ENCODE measurements at regions of chr12 and their contacts with region 1.

Region 1: DNA sequence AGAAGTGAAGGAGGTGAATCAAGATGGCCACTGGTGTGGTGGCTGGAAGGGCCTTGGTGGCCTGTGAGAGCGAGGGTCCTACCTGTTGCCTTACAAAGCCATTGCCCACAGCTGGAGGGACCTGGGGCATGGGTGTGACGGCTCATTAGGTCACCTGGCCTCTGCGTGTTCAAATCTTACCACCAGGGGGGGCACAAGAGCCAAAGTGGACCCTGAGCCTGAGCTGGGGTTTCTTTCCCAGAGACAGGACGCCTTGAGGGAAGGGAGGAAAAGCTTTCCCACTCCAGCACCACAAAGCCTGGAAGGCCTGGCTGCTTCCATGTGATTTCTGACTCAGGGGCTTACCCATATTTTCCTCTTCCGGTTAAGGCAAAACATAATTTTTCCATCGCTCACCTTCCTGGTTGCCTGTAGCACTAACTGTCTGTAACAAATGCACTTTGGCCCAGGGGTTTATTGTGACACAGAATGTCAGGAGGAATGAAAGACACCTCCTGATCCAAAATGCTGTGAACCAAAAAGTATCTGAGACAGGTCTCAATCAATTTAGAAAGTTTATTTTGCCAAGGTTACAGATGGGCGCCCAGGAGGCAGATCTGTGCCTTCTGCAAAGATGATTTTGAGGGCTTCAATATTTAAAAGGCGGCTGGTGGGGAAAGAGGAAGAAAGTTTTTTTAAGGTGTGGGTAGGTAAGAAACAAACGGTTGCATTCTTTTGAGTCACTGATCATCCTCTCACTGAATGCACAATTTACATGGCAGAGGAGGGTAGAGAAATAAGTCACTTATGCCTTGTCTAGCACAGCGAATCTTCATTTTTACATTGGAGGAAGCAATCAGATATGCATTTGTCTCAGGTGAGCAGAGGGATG is 4.3 kb upstream of the CD9 start:
- DNase-seq: peak; percentile 83
- ATAC-seq: peak; percentile 83
- H3K4me3 Mint-ChIP-seq: no peak overlapping the region
- H3K27ac Mint-ChIP-seq: no peak overlapping the region
- H3K4me1 Mint-ChIP-seq: peaks cover 10% of the 10 kb centered on the region
- H3K27me3 Mint-ChIP-seq: peaks cover 37% of the 10 kb centered on the region

Region 2: DNA sequence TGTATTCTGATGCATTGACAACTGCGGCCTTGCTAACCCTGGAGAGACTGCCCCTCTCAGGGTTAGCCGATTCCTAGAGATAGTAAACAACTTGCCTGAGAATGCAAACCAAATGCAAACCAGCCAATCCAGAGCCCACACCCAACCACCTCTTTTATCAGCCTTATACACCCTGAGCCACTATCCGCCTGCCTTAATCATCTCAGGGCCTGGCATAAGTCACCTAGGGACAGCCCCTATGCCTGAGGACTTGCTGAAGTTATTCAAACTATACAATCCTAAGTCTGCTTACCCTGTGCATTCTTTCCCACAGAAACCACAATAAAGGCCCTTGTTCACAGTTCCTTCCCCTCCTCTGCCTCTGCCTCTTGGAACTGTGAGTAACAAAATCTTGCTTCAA is 975.1 kb before region 1 on chr12:
- CTCF ChIA-PET with region 1: no interaction called
- POLR2A ChIA-PET with region 1: no interaction called
- DNase-seq: peak; percentile 26
- ATAC-seq: peak; percentile 68
- H3K4me3 Mint-ChIP-seq: no peak overlapping the region
- H3K27ac Mint-ChIP-seq: no peak overlapping the region
- H3K4me1 Mint-ChIP-seq: peaks cover 9% of the 10 kb centered on the region
- H3K27me3 Mint-ChIP-seq: no peaks in the 10 kb centered on the region

Region 3: DNA sequence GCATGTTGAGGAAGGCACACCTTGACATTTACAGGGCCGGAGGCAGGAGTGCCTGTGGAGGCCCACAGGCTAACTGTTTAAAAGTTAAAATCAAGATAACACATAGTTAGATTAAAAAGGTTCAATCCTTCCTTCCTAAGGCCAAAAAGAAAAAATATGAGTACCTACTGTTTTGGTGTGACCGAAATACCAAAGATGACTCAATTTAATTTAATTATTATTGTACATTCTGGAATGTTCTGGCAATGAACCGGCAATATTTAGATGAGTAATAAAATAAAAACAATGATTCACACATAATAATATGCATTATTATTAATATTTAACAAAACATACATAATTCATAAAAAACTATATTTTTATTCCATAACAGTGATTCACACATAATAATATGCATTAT is 900.7 kb before region 1 on chr12:
- CTCF ChIA-PET with region 1: no interaction called
- POLR2A ChIA-PET with region 1: no interaction called
- DNase-seq: no peak
- ATAC-seq: no peak
- H3K4me3 Mint-ChIP-seq: no peak overlapping the region
- H3K27ac Mint-ChIP-seq: no peak overlapping the region
- H3K4me1 Mint-ChIP-seq: no peaks in the 10 kb centered on the region
- H3K27me3 Mint-ChIP-seq: no peaks in the 10 kb centered on the region

Region 4: GRCh38 chr12:6116175-6117021 is 79.5 kb before region 1 on chr12:
- CTCF ChIA-PET with region 1: no interaction called
- POLR2A ChIA-PET with region 1: no interaction called
- DNase-seq: no peak
- ATAC-seq: no peak
- H3K4me3 Mint-ChIP-seq: no peak overlapping the region
- H3K27ac Mint-ChIP-seq: no peak overlapping the region
- H3K4me1 Mint-ChIP-seq: peaks cover 3% of the 10 kb centered on the region
- H3K27me3 Mint-ChIP-seq: peaks cover 4% of the 10 kb centered on the region

Region 5: GRCh38 chr12:6140651-6141447 is 55.1 kb before region 1 on chr12:
- CTCF ChIA-PET with region 1: interaction called, 10 read pairs
- POLR2A ChIA-PET with region 1: no interaction called
- DNase-seq: peak; percentile 31
- ATAC-seq: peak; percentile 71
- H3K4me3 Mint-ChIP-seq: peak overlapping the region; percentile 42
- H3K27ac Mint-ChIP-seq: peak overlapping the region; percentile 92
- H3K4me1 Mint-ChIP-seq: peaks cover 45% of the 10 kb centered on the region
- H3K27me3 Mint-ChIP-seq: no peaks in the 10 kb centered on the region

Region 6: DNA sequence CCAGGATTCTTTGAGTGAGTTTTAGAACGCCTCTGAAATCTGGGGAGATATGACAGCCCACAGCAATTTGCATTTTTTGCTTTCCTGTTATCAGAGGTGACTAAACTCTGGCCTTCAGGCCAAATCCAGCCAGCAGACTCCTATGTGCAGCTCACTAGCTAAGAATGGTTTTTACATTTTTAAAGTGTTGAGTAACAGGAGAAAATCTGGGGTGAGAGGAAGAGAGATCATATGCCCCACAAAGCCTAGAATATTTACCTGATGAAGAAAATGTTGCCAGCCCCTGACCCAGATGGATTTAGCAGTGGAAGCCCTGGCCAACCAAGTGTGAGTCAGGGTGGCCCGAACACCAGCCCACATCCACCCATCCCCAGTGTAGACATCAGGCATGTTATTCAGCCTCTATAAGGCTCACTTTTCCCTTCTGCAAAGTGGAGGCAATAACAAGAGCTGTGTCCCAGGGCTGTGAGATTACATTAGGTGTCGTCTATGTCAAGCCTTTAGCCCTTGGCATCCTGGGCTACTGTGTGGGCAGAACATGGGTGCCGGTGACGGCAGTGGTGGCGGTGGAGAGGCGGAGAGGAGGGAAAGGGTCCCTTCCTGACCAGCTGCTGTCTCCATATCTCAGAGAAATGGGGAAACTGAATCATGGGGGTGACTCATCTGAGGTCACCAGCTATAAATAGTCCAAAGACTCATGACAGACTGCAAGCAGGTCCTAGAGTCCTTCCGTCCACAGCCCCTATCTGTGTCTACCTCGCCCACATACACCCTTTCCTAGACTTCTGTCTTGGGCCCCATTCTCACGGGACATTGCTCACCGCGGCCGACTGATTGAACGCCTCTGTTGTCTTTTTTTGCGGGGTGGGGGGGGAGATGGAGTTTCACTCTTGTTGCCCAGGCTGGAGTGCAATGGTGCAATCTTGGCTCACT is 28.3 kb before region 1 on chr12:
- CTCF ChIA-PET with region 1: interaction called, 13 read pairs
- POLR2A ChIA-PET with region 1: no interaction called
- DNase-seq: peak; percentile 68
- ATAC-seq: peak; percentile 80
- H3K4me3 Mint-ChIP-seq: no peak overlapping the region
- H3K27ac Mint-ChIP-seq: peak overlapping the region; percentile 77
- H3K4me1 Mint-ChIP-seq: peaks cover 36% of the 10 kb centered on the region
- H3K27me3 Mint-ChIP-seq: no peaks in the 10 kb centered on the region

Region 7: GRCh38 chr12:6230321-6231110 is 34.6 kb after region 1 on chr12:
- CTCF ChIA-PET with region 1: interaction called, 11 read pairs
- POLR2A ChIA-PET with region 1: no interaction called
- DNase-seq: peak; percentile 87
- ATAC-seq: peak; percentile 96
- H3K4me3 Mint-ChIP-seq: peak overlapping the region; percentile 51
- H3K27ac Mint-ChIP-seq: peak overlapping the region; percentile 92
- H3K4me1 Mint-ChIP-seq: peaks cover 38% of the 10 kb centered on the region
- H3K27me3 Mint-ChIP-seq: no peaks in the 10 kb centered on the region

Region 8: GRCh38 chr12:6278439-6279255 is 82.7 kb after region 1 on chr12:
- CTCF ChIA-PET with region 1: interaction called, 64 read pairs
- POLR2A ChIA-PET with region 1: no interaction called
- DNase-seq: peak; percentile 84
- ATAC-seq: peak; percentile 97
- H3K4me3 Mint-ChIP-seq: peak overlapping the region; percentile 71
- H3K27ac Mint-ChIP-seq: no peak overlapping the region
- H3K4me1 Mint-ChIP-seq: peaks cover 9% of the 10 kb centered on the region
- H3K27me3 Mint-ChIP-seq: peaks cover 19% of the 10 kb centered on the region

Region 9: DNA sequence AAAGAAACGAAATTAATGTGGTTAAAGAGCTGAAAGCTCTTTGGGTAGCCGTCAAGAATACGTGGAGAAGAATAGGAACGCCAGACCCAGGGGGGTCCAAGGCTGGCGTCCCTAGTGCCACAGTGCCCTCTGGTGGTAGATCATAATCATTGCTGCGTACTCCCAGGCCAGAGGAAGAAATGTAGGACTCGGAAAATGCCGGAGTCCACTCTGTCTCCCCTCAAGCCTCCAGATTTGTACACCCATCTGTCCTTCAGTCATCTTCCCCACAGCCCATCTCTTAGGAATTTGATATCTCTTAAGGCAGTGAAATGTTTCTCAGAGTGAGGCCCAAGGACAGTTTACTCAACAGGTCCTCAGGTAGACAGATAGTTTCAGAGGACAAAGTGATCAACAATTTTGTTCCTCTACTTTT is 89.2 kb after region 1 on chr12:
- CTCF ChIA-PET with region 1: interaction called, 64 read pairs
- POLR2A ChIA-PET with region 1: no interaction called
- DNase-seq: peak; percentile 71
- ATAC-seq: peak; percentile 86
- H3K4me3 Mint-ChIP-seq: no peak overlapping the region
- H3K27ac Mint-ChIP-seq: no peak overlapping the region
- H3K4me1 Mint-ChIP-seq: peaks cover 4% of the 10 kb centered on the region
- H3K27me3 Mint-ChIP-seq: peaks cover 3% of the 10 kb centered on the region

Region 10: DNA sequence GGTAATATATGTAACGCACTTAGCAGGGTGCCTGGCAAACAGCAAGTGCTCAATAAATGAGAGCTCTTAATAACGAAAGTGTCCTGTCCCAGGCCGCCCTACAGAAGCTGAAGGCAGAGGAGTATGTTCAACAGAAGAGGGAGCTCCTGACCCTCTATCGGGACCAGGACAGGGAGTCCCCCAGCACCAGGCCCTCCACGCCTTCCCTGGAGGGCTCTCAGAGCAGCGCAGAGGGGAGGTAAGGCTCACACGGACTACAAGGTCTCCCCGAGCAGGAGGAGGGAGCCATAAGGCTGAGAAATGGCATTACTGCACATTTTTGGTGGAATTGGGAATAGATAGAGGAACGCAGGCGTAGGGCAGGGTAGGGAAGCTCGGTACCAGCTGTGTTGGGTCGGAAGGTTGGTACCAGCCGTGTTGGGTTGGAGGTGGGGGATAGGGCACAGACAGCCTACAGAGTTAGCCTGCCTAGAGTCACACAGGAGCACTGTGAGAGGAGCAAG is 130.5 kb after region 1 on chr12:
- CTCF ChIA-PET with region 1: no interaction called
- POLR2A ChIA-PET with region 1: no interaction called
- DNase-seq: peak; percentile 41
- ATAC-seq: no peak
- H3K4me3 Mint-ChIP-seq: no peak overlapping the region
- H3K27ac Mint-ChIP-seq: peak overlapping the region; percentile 33
- H3K4me1 Mint-ChIP-seq: peaks cover 53% of the 10 kb centered on the region
- H3K27me3 Mint-ChIP-seq: no peaks in the 10 kb centered on the region